ENCODE measurements at regions of chr7 and their contacts with region 1.

Region 1: DNA sequence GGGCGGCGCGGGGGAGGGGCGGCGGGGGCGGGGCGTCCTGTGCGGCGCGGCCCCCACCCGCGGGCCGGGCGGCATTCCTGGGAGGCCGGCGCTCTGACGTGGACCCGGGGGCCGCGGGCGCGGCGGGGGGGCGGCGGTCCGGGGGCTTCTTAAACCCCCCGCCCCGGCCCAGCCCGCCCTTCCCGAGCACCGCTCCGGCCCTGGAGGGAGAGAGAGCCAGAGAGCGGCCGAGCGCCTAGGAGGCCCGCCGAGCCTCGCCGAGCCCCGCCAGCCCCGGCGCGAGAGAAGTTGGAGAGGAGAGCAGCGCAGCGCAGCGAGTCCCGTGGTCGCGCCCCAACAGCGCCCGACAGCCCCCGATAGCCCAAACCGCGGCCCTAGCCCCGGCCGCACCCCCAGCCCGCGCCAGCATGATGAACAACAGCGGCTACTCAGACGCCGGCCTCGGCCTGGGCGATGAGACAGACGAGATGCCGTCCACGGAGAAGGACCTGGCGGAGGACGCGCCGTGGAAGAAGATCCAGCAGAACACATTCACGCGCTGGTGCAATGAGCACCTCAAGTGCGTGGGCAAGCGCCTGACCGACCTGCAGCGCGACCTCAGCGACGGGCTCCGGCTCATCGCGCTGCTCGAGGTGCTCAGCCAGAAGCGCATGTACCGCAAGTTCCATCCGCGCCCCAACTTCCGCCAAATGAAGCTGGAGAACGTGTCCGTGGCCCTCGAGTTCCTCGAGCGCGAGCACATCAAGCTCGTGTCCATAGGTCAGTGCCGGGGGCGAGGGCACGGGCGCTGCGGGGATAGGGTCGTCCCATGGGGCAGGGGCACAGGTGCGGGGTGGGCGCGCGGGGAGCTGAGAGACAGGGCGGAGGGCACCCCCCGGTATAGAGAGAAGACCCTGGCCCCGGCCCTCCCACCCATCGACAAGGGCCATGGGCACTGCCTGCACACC is at the start of gene FLNC:
- DNase-seq: peak; percentile 58 to 80 (median 73)
- H3K4me3 ChIP-seq: peak within 1 kb of the TSS; percentile 60
- H3K27ac ChIP-seq: peak within 1 kb of the TSS; percentile 55 to 70
- H3K4me1 ChIP-seq: peaks cover 25% of the 10 kb centered on the region
- H3K27me3 ChIP-seq: no peaks in the 10 kb centered on the region
- CTCF ChIP-seq: no peak
- EP300 ChIP-seq: no peak
- POLR2A ChIP-seq: no peak
- total RNA-seq, gene FLNC: 8.0 to 51.2 (median 17.3) TPM

Region 2: DNA sequence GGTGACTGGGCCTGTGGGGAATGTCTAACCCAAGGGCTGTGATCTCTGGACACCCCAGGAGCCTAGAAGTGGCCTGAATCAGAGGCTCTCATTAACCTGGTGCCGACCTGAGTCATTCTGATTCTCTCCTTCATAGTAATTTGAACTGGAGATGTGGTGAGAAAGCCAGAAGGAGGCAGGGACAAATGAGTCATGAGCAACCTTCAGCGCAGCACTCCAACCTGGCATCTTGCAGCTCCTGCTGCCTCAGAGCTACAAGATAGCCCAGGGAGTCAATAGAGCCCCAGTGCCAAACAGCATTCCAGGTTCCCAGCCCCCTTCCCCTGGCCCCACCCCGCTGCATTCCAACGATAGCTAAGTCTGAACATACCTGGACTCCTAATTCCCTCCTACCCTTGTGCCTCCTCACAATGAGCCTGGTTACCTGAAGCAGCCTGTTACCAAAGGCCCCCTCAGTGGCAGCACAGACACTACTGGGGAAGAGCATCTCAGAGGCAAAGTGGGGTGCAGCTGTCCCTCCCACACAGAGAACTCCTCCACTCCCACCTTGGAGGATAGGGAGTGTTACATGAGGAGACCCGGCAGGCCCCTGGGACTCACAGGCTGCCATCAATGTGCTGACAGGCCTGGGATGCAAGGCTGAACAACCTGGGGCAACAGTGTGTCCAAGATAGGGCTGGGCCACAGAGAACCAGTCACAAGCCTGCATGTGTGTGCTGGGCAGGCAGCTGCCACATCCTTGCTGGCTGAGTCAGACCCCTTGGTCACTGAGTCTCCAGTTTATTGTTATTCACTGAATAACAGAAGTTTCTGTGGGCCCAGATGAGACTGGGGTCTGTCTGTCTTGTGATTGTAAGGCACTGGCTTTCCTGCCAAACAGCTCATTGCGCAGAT is 666.2 kb before region 1 on chr7:
- intact Hi-C with region 1: no loop called
- DNase-seq: no peak
- H3K4me3 ChIP-seq: no peak overlapping the region
- H3K27ac ChIP-seq: no peak overlapping the region
- H3K4me1 ChIP-seq: peaks cover 3% of the 10 kb centered on the region
- H3K27me3 ChIP-seq: no peaks in the 10 kb centered on the region
- CTCF ChIP-seq: no peak
- EP300 ChIP-seq: no peak
- POLR2A ChIP-seq: no peak

Region 3: DNA sequence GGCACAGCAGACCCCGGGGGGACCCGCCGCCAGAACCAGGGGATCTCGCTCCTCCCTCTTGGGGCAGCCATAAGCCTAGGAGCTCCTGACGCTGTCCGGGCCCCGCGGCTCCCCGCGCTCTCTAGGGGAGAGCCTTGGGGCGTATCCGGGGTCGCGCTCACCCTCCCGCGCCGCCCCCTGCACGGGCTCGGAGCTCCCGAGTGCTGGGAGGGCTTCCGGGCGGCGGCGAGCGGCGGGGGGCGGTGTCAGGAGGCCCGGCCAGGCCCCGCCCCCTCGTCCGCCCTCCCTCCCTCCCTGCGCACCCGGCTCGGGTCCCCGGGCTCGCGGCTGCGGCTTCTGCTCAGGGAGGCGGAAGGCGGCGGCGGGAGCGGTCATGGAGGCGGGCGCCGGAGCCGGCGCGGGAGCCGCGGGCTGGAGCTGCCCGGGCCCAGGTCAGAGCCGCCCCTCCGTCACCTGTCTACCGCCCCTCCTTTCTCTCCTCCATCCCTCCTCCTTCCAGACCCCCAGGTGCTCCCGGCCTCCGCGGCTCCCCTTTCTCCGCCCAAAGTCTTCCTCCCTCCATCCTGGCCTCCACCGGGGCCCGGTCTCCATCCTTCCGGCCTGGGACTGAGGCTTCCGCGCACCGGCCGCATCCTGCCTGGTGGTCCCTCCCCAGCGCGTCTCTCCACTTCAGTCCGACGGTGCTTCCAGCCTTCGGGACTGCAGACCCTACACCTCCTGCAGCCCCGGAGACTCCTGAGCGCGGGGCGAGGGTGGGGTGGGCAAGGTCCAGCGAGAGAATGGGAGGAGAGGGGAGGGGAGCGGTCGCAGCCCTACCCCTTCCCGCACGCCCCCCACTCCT is 39.2 kb before region 1 on chr7:
- intact Hi-C with region 1: loop called in 1 of 4 experiments (anchors 2 kb)
- DNase-seq: peak; percentile 64 to 74 (median 69)
- H3K4me3 ChIP-seq: peak overlapping the region; percentile 70
- H3K27ac ChIP-seq: peak overlapping the region; percentile 23 to 39
- H3K4me1 ChIP-seq: peaks cover 4% of the 10 kb centered on the region
- H3K27me3 ChIP-seq: no peaks in the 10 kb centered on the region
- CTCF ChIP-seq: no peak
- EP300 ChIP-seq: no peak
- POLR2A ChIP-seq: no peak

Region 4: DNA sequence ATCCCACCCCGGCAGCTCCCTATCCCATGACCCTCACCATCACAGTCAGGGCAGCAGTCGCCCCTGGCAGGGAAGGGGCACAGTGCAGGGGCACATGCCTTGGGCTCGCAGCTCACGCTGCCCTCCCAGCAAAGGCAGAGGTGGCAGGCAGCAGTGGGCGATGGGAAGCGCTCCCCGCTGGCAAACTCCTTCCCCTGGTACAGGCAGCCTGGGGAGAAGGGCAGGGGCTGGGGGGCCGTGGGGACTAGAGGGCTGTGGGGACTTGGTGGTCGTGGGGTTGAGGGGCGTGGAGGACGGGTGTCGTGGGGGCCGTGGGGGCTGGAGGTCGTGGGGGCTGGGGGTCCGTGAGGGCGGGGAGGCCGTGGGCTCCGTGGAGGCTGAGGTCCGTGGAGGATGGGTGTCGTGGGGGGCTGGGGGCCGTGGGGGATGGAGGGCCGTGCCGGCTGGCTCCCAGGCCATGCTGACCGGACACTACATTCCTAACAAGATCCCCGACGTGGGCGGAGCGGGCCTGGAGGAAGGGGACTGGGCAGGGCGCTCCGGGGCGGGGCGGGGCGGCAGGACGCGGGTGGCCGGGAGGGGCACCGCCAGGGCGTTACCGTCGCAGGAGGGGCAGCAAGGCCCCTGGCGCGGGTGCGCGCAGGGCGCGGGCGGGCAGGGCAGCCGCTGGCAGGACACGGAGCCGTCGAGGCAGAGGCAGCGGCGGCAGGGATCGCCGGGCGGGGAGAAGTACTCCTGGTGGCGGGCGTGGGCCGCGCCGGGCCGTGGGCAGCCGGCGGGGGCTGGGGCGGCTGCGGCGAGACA is 60.0 kb after region 1 on chr7:
- intact Hi-C with region 1: no loop called
- DNase-seq: peak in 2 of 5 donors; percentile 15 to 32
- H3K4me3 ChIP-seq: no peak overlapping the region
- H3K27ac ChIP-seq: no peak overlapping the region
- H3K4me1 ChIP-seq: no peaks in the 10 kb centered on the region
- H3K27me3 ChIP-seq: no peaks in the 10 kb centered on the region
- CTCF ChIP-seq: no peak
- EP300 ChIP-seq: no peak
- POLR2A ChIP-seq: no peak